A549 (cell line): ENCODE measurements at regions of chr10 and their contacts with region 1.

Region 1: GRCh38 chr10:79127151-79127961 is 58.6 kb downstream of the ZMIZ1 start:
- DNase-seq: peak; percentile 95 to 98
- ATAC-seq: peak; percentile 85 to 91
- H3K4me3 ChIP-seq: 0 out of 3 replicates have a peak overlapping the region, but pooled peaks have one; percentile 4
- H3K27ac ChIP-seq: peak overlapping the region; percentile 84 to 94
- H3K4me1 ChIP-seq: peaks cover 93% of the 10 kb centered on the region
- CTCF ChIP-seq: peak; percentile 19; the same call in 1 of the 3 replicates
- EP300 ChIP-seq: peak; percentile 16 to 50; a peak in 3 of 5 replicates
- POLR2A ChIP-seq: no peak
- RAD21 ChIP-seq: peak; percentile 31 to 61; a peak in 4 of 5 replicates

Region 2: DNA sequence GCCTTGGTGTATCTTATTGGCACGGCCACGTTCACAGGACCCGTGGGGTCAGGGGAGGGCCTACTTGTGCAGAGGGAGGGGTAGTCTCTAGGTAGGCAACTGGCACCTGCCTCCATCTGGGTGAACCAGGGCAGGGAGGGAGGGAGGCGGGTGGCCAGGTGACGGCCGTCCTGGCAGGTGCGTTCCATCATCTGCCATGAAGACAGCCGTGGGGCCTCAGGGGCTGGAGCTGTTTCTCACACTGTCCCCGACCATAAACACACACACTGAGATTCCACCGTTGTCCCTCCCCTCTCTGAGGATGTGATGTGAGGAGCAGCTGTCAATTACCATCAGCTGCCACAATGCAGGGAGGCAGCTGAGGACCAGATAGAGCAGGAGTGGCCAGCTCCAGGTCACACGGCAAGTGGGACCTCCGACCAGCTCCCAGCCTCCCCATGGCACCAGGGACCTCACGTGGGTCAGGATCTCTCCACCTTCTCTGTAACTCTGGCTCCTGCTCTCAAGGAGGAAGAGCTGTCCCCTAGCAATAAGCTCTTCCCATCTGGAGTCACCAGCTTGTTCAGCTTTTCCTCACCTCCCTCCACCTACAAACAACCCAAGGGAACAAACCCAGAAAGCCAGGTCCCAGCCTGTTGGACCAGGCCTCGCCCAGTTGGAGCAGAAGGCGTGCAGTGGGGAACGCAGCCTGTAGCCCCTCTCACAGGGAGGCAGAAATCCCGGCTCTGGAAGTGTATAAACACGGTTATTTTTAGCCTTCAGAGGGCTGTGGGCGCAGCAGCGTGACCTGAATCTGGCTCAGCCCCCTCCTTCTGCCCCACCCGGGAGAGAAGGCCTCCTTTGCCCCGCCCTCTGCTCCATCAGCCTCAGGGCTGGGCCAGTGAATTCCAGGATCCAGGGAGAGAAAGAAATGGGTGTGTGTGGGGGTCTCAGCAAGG is 25.5 kb before region 1 on chr10:
- CTCF ChIA-PET with region 1: interaction called, 13 read pairs
- POLR2A ChIA-PET with region 1: no interaction called
- DNase-seq: no peak
- ATAC-seq: peak; percentile 4 to 56; a peak in 3 of 6 replicates
- H3K4me3 ChIP-seq: no peak overlapping the region
- H3K27ac ChIP-seq: peak overlapping the region; percentile 46 to 92; a peak in 5 of 6 replicates
- H3K4me1 ChIP-seq: peaks cover 98% of the 10 kb centered on the region
- CTCF ChIP-seq: no peak
- EP300 ChIP-seq: no peak
- POLR2A ChIP-seq: no peak
- RAD21 ChIP-seq: no peak

Region 3: DNA sequence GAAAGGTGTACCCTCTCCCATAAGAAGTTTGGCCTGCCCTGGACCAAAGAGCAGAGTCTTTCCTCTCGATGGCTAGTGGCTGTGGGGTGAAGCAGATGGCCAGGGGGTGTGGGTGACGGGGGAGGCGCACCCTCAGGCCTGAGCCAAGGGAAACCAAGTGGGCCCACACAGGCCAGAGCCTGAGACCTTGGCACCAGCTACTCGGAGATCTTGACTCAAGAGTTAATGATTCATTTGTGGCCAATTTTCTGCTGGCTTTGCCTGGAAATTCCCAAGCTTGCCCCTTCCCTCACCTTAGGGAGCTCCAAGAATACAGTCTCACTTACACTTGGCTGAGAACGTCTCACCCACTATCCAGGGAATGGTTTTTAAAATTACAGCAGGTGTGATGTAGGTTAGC is 15.9 kb before region 1 on chr10:
- CTCF ChIA-PET with region 1: interaction called, 31 read pairs
- POLR2A ChIA-PET with region 1: interaction called, 3 read pairs
- DNase-seq: peak; percentile 83 to 85
- ATAC-seq: peak; percentile 38 to 79; a peak in 4 of 6 replicates
- H3K4me3 ChIP-seq: no peak overlapping the region
- H3K27ac ChIP-seq: peak overlapping the region; percentile 91 to 92
- H3K4me1 ChIP-seq: peaks cover 100% of the 10 kb centered on the region
- CTCF ChIP-seq: no peak
- EP300 ChIP-seq: peak in 1 of 2 experiments; percentile 21; a peak in 1 of 5 replicates
- POLR2A ChIP-seq: no peak
- RAD21 ChIP-seq: peak; percentile 15 to 31; a peak in 2 of 5 replicates

Region 4: DNA sequence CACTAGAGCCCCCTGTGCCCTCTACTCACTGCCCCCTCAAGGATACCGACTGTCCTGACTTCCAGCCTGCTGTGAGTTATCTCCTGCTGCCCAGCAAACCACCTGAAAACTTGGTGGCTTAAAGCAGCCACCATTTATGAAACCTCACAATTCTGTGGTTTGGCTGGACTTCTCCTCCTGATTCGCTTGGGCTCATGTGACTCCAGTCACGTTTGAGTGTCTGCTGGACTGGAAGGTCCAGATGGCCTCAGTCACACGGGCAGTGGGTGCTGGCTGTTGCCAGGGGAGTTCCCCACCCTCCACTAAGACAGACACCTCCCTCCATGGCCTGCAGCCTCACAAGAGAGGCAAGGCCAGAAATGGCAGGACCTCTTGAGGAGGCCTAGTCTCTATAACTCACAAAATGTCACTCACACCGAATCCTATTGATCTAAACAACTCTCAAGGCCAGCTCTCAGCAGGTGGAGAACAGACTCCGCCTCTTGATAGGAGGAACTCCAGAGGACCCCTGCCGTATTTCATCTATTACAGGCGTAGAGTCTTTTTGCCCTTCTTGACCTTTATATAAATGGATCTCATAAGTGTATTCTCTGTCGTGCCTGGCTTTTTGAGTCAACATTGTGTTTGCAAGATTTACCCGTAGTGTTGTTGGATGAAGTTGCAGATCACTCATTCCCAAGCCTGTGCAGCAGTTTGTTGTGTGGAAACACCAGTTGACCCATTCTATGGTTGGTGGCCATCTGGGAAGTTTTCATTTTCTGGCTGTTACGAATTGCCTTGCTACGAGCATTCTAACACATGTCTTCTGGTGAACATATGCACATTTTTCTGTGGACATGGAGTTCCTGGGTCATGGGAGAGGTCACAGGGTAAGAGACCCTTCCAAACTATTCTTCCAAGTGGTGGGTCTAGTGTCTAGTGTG is 10.3 kb before region 1 on chr10:
- CTCF ChIA-PET with region 1: interaction called, 31 read pairs
- POLR2A ChIA-PET with region 1: no interaction called
- DNase-seq: no peak
- ATAC-seq: no peak
- H3K4me3 ChIP-seq: no peak overlapping the region
- H3K27ac ChIP-seq: peak overlapping the region; percentile 32 to 92; a peak in 3 of 6 replicates
- H3K4me1 ChIP-seq: peaks cover 54% of the 10 kb centered on the region
- CTCF ChIP-seq: no peak
- EP300 ChIP-seq: no peak
- POLR2A ChIP-seq: no peak
- RAD21 ChIP-seq: no peak

Region 5: GRCh38 chr10:79139124-79139835 is 11.9 kb after region 1 on chr10:
- CTCF ChIA-PET with region 1: interaction called, 33 read pairs
- POLR2A ChIA-PET with region 1: no interaction called
- DNase-seq: no peak
- ATAC-seq: no peak
- H3K4me3 ChIP-seq: no peak overlapping the region
- H3K27ac ChIP-seq: peak overlapping the region in 1 of 2 experiments; percentile 57; a peak in 3 of 6 replicates
- H3K4me1 ChIP-seq: peaks cover 58% of the 10 kb centered on the region
- CTCF ChIP-seq: no peak
- EP300 ChIP-seq: no peak
- POLR2A ChIP-seq: no peak
- RAD21 ChIP-seq: no peak

Region 6: DNA sequence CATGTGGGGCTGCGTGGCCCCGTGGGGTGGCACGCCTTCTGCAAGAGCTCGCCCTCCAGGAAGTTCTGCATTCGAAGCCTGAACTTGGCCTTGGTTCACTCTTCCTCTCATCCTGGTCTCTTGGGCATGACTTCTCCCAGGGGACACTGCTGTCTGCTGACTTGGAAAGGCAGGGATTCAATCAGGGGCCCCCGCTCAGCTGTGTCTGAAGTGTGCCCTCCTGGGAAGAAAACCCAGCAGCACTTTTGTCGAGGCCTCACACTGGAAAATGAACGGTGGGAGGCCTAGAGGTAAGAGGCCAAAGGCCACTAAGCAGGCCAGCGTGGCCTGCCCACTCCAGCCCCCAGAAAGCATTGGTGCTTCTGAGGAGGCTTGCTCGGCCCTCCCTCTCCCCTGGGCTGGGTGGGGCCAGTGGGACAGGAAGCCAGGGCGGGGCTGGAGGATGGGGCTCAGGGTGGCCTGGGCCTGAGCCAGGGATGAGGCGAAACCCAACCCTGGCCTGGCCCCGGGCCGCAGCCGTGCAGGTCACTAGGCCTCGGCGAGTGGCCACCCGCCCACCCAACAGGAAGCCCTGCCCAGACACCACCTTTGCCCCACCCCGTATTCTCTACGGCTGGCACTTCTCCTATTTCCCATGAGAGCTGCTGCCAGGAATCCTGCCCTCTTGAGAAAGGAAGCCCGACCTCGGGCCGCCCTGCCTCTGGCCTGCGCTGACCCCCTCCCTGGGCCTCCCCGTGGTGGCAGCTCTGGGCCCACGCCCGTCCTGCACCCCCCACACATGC is 22.5 kb after region 1 on chr10:
- CTCF ChIA-PET with region 1: interaction called, 33 read pairs
- POLR2A ChIA-PET with region 1: no interaction called
- DNase-seq: peak; percentile 91 to 97
- ATAC-seq: peak; percentile 62 to 82
- H3K4me3 ChIP-seq: no peak overlapping the region
- H3K27ac ChIP-seq: peak overlapping the region; percentile 98 to 99
- H3K4me1 ChIP-seq: peaks cover 99% of the 10 kb centered on the region
- CTCF ChIP-seq: no peak
- EP300 ChIP-seq: peak; percentile 72 to 83; a peak in 2 of 5 replicates
- POLR2A ChIP-seq: 0 out of 2 replicates have a peak, but pooled peaks have one; percentile 8
- RAD21 ChIP-seq: peak in 1 of 2 experiments; percentile 59; a peak in 4 of 5 replicates

Region 7: GRCh38 chr10:79562135-79562756 is 434.9 kb after region 1 on chr10:
- CTCF ChIA-PET with region 1: no interaction called
- POLR2A ChIA-PET with region 1: no interaction called
- DNase-seq: peak; percentile 63 to 68
- ATAC-seq: peak; percentile 93 to 95
- H3K4me3 ChIP-seq: no peak overlapping the region
- H3K27ac ChIP-seq: no peak overlapping the region
- H3K4me1 ChIP-seq: no peaks in the 10 kb centered on the region
- CTCF ChIP-seq: peak; percentile 84
- EP300 ChIP-seq: no peak
- POLR2A ChIP-seq: no peak
- RAD21 ChIP-seq: peak; percentile 79 to 81